Testis (tissue), 5 donors: ENCODE measurements at regions of chr1 and their contacts with region 1.

Region 1: DNA sequence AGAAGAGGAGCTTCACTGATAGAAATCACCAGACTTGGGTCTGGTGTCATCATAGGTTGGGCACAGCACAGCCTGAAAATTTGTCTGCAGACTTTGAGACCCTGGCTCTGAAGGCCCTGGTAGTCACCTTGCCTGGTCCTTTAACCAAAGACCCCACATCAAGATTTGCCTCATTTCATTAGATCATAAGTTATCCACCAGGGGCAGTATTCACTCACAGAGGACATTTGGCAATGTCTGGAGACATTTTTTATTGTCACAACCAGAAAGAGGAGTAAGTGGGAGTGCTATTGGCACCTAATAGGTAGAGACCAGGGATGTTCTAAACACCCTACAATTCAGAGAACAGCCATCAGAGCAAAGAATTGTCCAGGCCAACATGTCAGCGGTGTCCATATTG is 22.1 kb upstream of the PAX7 start:
- DNase-seq: no peak
- H3K4me3 ChIP-seq: no peak overlapping the region
- H3K27ac ChIP-seq: no peak overlapping the region
- H3K4me1 ChIP-seq: no peaks in the 10 kb centered on the region
- H3K27me3 ChIP-seq: no peaks in the 10 kb centered on the region
- CTCF ChIP-seq: peak in 1 of 3 experiments; percentile 9
- POLR2A ChIP-seq: no peak

Region 2: DNA sequence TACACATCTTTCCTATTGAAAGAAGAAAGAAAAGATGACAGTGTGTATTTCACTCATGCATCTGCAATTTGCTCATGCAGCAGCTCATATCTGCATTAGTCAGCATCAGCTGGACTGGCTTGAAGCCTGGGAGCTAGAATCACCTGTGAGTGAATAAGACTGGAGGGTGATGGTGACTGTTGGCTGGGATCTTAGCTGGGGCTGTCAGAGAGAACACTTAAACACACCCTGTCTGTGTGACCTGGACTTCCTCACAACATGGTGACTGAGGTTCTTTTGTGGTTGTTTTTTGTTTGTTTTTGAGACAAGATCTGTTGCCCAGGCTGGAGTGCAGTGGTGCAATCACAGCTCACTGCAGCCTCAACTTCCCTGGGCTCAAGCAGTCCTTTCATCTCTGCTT is 102.9 kb before region 1 on chr1:
- intact Hi-C with region 1: no loop called
- DNase-seq: no peak
- H3K4me3 ChIP-seq: no peak overlapping the region
- H3K27ac ChIP-seq: no peak overlapping the region
- H3K4me1 ChIP-seq: no peaks in the 10 kb centered on the region
- H3K27me3 ChIP-seq: no peaks in the 10 kb centered on the region
- CTCF ChIP-seq: no peak
- POLR2A ChIP-seq: no peak

Region 3: GRCh38 chr1:18819986-18820790 is 211.7 kb after region 1 on chr1:
- intact Hi-C with region 1: loop called (anchors 10 kb)
- DNase-seq: no peak
- H3K4me3 ChIP-seq: no peak overlapping the region
- H3K27ac ChIP-seq: no peak overlapping the region
- H3K4me1 ChIP-seq: no peaks in the 10 kb centered on the region
- H3K27me3 ChIP-seq: no peaks in the 10 kb centered on the region
- CTCF ChIP-seq: no peak
- POLR2A ChIP-seq: no peak

Region 4: GRCh38 chr1:18913065-18913835 is 304.7 kb after region 1 on chr1:
- intact Hi-C with region 1: no loop called
- DNase-seq: peak; percentile 88
- H3K4me3 ChIP-seq: no peak overlapping the region
- H3K27ac ChIP-seq: no peak overlapping the region
- H3K4me1 ChIP-seq: peaks cover 6% of the 10 kb centered on the region
- H3K27me3 ChIP-seq: no peaks in the 10 kb centered on the region
- CTCF ChIP-seq: peak; percentile 77 to 91 (median 87)
- POLR2A ChIP-seq: no peak